ENCODE measurements at regions of chr22 and their contacts with region 1.

Region 1: GRCh38 chr22:41697126-41697775 is 2.1 kb upstream of the MEI1 start:
- DNase-seq: peak; percentile 90 to 96 (median 92)
- ATAC-seq: peak; percentile 53 to 90 (median 82)
- H3K4me3 ChIP-seq: peak overlapping the region in 7 of 12 donors; percentile 30 to 43 (median 37)
- H3K27ac ChIP-seq: peak overlapping the region in 10 of 12 donors; percentile 39 to 70 (median 56)
- H3K4me1 ChIP-seq: peaks cover 0 to 20% (median 14%) of the 10 kb centered on the region in 12 donors
- H3K27me3 ChIP-seq: no peaks in the 10 kb centered on the region
- CTCF ChIP-seq: peak; percentile 94 to 99 (median 99)
- POLR2A ChIP-seq: no peak

Region 2: GRCh38 chr22:41800348-41801146 is 103.3 kb after region 1 on chr22 and contains the start of gene CCDC134:
- intact Hi-C with region 1: loop called in 1 of 10 experiments (anchors 5 kb)
- DNase-seq: peak; percentile 92 to 96 (median 94)
- ATAC-seq: peak; percentile 96 to 99 (median 99)
- H3K4me3 ChIP-seq: peak within 1 kb of the TSS; percentile 61 to 98 (median 85)
- H3K27ac ChIP-seq: peak within 1 kb of the TSS; percentile 56 to 96 (median 90)
- H3K4me1 ChIP-seq: peaks cover 0 to 22% (median 17%) of the 10 kb centered on the region in 12 donors
- H3K27me3 ChIP-seq: no peaks in the 10 kb centered on the region
- CTCF ChIP-seq: peak in 1 of 12 donors; percentile 14
- POLR2A ChIP-seq: peak in 1 of 2 donors; percentile 86
- total RNA-seq, gene CCDC134: 2.3 to 10.2 (median 3.5) TPM

Region 3: DNA sequence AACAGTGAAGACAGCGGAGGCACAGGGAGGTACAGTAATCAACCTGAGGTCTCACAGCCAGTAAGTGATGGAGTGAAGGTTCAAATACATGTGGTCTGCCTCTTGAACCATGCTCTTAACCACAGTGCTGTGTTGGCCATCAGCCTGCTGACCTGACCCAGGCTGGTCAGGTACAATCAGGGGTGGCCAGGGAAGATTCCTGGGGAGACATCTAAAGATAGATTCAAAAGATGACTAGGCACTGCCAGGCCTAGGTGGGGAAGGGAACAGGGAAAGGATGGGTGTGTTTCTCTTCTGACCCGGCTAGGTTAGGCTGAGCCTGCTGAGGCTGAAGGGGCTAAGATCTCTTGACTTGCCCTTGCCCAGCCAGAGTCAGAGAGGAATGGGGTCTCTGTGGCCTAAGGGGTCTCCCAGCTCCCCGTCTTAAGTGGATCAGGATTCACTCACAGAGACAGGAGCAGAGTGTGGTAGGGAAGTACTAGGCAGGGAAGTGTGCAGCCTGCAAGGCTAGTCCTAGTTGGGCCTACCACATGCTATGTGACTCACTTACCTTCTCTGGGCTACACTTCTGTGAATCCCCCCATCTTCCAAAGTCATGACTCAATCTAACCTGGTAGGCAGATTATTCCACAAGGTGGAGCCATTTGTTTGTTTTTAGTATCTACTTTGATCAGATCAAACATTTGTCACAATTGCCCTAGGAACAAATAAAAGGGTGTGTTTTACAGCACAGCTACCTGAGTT is 125.2 kb after region 1 on chr22:
- intact Hi-C with region 1: loop called in 4 of 10 experiments (anchors 5 to 10 kb)
- DNase-seq: no peak
- ATAC-seq: peak in 2 of 4 donors; percentile 16 to 26
- H3K4me3 ChIP-seq: no peak overlapping the region
- H3K27ac ChIP-seq: no peak overlapping the region
- H3K4me1 ChIP-seq: peaks cover 3 to 29% (median 22%) of the 10 kb centered on the region in 12 donors
- H3K27me3 ChIP-seq: no peaks in the 10 kb centered on the region
- CTCF ChIP-seq: peak; percentile 18 to 61 (median 48)
- POLR2A ChIP-seq: no peak

Region 4: DNA sequence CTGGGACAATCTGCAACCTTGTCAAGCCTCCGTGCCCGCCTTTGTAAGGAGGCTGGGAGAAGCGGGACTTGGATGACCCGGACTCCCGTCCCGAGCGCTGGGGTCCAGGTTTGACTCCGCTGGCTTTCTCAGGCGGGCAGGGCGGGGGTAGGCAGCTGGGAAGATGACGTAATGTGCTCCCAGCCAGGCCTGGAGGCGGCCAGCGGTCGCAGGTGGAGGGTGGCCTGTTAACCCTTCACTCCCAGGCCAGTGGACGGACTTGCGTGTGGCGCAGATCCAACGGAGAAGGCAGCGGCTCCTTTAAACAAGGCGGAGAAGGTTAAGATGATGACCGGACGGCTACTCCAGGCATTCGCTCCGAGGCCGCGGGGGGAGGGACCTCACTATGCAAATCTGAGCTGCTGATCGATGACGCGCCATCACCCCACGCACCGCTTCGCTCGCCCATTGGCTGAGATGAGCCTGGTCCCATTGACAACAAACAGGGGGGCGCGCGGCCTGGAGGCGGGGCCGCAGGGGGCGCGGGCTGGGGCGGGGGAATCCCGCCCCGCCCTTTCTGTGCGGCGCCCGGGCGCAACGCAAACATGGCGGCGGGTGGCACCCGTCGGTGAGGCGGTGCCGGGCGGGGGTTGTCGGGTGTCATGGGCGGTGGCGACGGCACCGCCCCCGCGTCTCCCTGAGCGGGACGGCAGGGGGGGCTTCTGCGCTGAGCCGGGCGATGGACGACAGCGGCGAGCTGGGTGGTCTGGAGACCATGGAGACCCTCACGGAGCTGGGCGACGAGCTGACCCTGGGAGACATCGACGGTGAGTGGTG is 135.5 kb after region 1 on chr22 and contains the start of gene SREBF2:
- intact Hi-C with region 1: loop called in 4 of 10 experiments (anchors 5 to 10 kb)
- DNase-seq: peak; percentile 100
- ATAC-seq: peak; percentile 97 to 99 (median 98)
- H3K4me3 ChIP-seq: peak within 1 kb of the TSS; percentile 76 to 99 (median 96)
- H3K27ac ChIP-seq: peak within 1 kb of the TSS; percentile 90 to 99 (median 94)
- H3K4me1 ChIP-seq: peaks cover 0 to 38% (median 13%) of the 10 kb centered on the region in 12 donors
- H3K27me3 ChIP-seq: no peaks in the 10 kb centered on the region
- CTCF ChIP-seq: peak in 3 of 12 donors; percentile 8 to 21 (median 17)
- POLR2A ChIP-seq: peak in 1 of 2 donors; percentile 74
- total RNA-seq, gene SREBF2: 49.1 to 109 (median 73.0) TPM

Region 5: GRCh38 chr22:41940832-41941765 is 243.8 kb after region 1 on chr22:
- intact Hi-C with region 1: loop called (anchors 1 to 2 kb)
- DNase-seq: peak; percentile 80 to 91 (median 84)
- ATAC-seq: peak; percentile 78 to 88 (median 87)
- H3K4me3 ChIP-seq: no peak overlapping the region
- H3K27ac ChIP-seq: peak overlapping the region in 5 of 12 donors; percentile 13 to 84 (median 23)
- H3K4me1 ChIP-seq: peaks cover 0 to 43% (median 14%) of the 10 kb centered on the region in 12 donors
- H3K27me3 ChIP-seq: no peaks in the 10 kb centered on the region
- CTCF ChIP-seq: peak; percentile 85 to 97 (median 93)
- POLR2A ChIP-seq: no peak

Region 6: DNA sequence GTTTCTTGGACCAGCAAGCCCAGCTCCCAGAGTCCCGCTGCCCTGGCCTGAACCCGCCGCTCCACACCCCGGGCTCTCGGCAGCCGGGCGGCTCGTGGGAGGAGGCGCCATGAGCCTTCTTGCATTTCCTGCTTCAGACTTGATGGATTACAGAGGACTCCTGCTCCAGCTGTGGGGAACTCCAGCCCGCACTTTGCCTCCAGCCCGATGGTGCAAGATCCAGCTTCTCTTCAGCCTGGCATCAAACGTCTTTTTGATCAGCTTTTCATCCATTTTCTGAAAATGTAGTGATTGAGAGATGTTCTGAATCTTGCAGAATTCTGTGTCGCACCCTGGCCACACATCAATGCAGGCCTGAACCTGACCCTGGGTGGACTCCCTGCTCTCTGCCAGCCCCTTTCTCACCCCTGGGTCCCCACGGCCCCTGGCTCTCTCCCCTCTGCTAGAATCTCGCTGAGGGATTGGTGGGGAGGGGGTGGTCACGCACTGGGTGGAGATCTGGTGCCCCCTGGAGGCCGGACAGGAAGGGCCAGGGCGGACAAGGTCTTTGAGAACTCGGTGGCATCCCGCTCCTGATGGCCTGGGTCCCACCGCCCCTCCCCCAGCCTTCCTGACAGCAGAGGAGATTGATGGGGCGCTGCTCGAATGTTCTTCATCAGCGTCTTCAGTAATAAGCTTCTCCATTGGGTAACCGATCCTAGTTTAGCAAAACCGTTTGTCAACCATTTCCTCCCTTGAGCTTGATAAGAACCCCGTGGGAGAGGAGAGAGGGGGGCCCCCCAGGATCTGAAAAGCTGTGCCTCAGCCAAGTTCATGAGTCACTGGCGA is 747.0 kb after region 1 on chr22:
- intact Hi-C with region 1: loop called in 1 of 10 experiments (anchors 5 kb)
- DNase-seq: peak; percentile 77 to 88 (median 82)
- ATAC-seq: peak; percentile 53 to 85 (median 83)
- H3K4me3 ChIP-seq: peak overlapping the region in 11 of 12 donors; percentile 12 to 55 (median 47)
- H3K27ac ChIP-seq: peak overlapping the region in 10 of 12 donors; percentile 59 to 84 (median 67)
- H3K4me1 ChIP-seq: peaks cover 0 to 40% (median 21%) of the 10 kb centered on the region in 12 donors
- H3K27me3 ChIP-seq: peaks cover 0 to 4% (median 0%) of the 10 kb centered on the region in 9 donors
- CTCF ChIP-seq: peak; percentile 44 to 72 (median 60)
- POLR2A ChIP-seq: no peak